Activated B cell treated with CpG ODN at 0.5 μM for 24 hours (primary cell): ENCODE measurements at regions of chr14 and their contacts with region 1.

Region 1: GRCh38 chr14:100285021-100285912 is 21.0 kb downstream of the SLC25A29 start:
- DNase-seq: peak; percentile 92
- ATAC-seq: peak; percentile 93
- H3K4me3 Mint-ChIP-seq: peak overlapping the region; percentile 82
- H3K27ac Mint-ChIP-seq: peak overlapping the region; percentile 85
- H3K4me1 Mint-ChIP-seq: peaks cover 10% of the 10 kb centered on the region
- H3K27me3 Mint-ChIP-seq: no peaks in the 10 kb centered on the region
- CTCF ChIP-seq: peak; percentile 71

Region 2: GRCh38 chr14:99287269-99287942 is 997.9 kb before region 1 on chr14:
- CTCF ChIA-PET with region 1: no interaction called
- POLR2A ChIA-PET with region 1: no interaction called
- intact Hi-C with region 1: no loop called
- DNase-seq: no peak
- ATAC-seq: no peak
- H3K4me3 Mint-ChIP-seq: no peak overlapping the region
- H3K27ac Mint-ChIP-seq: no peak overlapping the region
- H3K4me1 Mint-ChIP-seq: no peaks in the 10 kb centered on the region
- H3K27me3 Mint-ChIP-seq: peaks cover 10% of the 10 kb centered on the region
- CTCF ChIP-seq: no peak

Region 3: GRCh38 chr14:99982537-99983250 is 302.6 kb before region 1 on chr14:
- CTCF ChIA-PET with region 1: no interaction called
- POLR2A ChIA-PET with region 1: no interaction called
- intact Hi-C with region 1: loop called (anchors 5 kb)
- DNase-seq: no peak
- ATAC-seq: peak; percentile 98
- H3K4me3 Mint-ChIP-seq: no peak overlapping the region
- H3K27ac Mint-ChIP-seq: no peak overlapping the region
- H3K4me1 Mint-ChIP-seq: no peaks in the 10 kb centered on the region
- H3K27me3 Mint-ChIP-seq: no peaks in the 10 kb centered on the region
- CTCF ChIP-seq: peak; percentile 88

Region 4: DNA sequence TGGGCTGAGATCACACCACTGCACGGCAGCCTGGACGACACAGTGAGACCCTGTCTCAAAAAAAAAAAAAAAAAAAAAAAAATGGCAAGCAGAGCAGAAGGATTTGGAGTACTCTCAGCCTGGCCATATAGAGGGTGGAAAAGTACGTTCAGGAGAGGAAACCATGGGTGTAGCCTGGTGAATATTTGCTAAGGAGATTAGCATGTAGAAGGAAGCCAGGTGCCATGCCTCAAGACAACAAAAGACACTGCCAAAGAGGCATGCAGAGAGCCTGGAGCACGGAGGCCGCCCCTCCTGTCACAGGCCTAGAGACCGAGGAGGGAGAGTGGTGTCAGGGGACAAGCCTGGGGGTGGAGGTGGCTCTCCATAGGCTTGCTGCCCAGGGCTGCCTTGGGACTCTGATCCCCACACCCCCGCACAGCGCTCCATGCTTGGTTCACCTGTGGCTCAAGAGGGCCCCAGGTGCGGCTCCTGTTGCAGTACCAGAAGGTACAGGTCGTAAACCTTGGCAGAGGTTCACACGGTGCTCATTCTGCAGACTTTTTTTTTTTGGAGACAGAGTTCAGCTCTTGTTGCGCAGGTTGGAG is 97.9 kb before region 1 on chr14:
- CTCF ChIA-PET with region 1: no interaction called
- POLR2A ChIA-PET with region 1: no interaction called
- intact Hi-C with region 1: no loop called
- DNase-seq: no peak
- ATAC-seq: no peak
- H3K4me3 Mint-ChIP-seq: no peak overlapping the region
- H3K27ac Mint-ChIP-seq: no peak overlapping the region
- H3K4me1 Mint-ChIP-seq: no peaks in the 10 kb centered on the region
- H3K27me3 Mint-ChIP-seq: no peaks in the 10 kb centered on the region
- CTCF ChIP-seq: no peak

Region 5: DNA sequence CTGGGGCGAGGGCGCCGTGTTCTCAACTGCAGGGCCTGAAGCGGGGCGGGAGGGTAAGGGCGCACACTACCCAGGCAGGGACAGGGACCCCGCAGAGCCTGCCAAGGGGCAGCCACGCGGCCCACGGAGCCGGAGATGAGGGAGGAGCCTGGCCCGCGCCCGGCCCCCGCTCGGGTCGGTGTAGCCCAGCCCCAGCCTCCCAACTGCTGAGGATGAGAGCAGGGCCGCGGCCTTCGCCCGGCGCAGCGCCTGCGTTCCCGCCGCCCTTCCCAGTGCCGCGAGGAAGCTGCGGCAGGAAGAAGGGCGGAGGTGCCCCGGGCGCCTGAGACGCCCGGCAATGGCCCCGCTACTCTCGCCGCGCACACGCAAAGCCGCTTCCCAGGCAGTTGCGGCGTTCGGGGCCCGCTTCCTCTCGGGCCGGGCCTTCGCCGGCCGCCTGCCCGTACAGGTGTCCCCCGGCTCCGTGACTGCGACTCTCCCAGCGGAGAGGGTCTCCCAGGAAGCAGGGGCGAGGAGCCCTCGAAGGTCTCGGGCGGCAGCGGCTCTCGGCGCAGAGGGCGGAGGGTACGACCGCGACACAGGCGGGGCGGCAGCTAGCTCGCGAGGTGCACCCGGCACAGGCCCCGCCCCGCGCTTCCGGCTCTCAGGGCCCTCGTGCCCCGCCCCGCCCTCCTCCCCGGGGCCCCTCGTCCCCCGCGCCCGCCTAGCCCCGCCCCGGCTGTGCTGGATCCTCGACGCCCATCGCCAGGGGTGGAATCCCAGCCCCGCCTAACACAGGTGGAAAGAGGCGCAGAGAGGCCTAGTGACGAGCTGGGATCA is 71.1 kb before region 1 on chr14:
- CTCF ChIA-PET with region 1: no interaction called
- POLR2A ChIA-PET with region 1: no interaction called
- intact Hi-C with region 1: loop called (anchors 1 kb)
- DNase-seq: peak; percentile 91
- ATAC-seq: peak; percentile 96
- H3K4me3 Mint-ChIP-seq: peak overlapping the region; percentile 85
- H3K27ac Mint-ChIP-seq: peak overlapping the region; percentile 80
- H3K4me1 Mint-ChIP-seq: peaks cover 17% of the 10 kb centered on the region
- H3K27me3 Mint-ChIP-seq: no peaks in the 10 kb centered on the region
- CTCF ChIP-seq: no peak

Region 6: GRCh38 chr14:100297302-100298300 is 12.3 kb after region 1 on chr14:
- CTCF ChIA-PET with region 1: interaction called, 8 read pairs
- POLR2A ChIA-PET with region 1: interaction called, 4 read pairs
- intact Hi-C with region 1: loop called (anchors 1 kb)
- DNase-seq: peak; percentile 42
- ATAC-seq: peak; percentile 83
- H3K4me3 Mint-ChIP-seq: peak overlapping the region; percentile 70
- H3K27ac Mint-ChIP-seq: peak overlapping the region; percentile 87
- H3K4me1 Mint-ChIP-seq: peaks cover 60% of the 10 kb centered on the region
- H3K27me3 Mint-ChIP-seq: no peaks in the 10 kb centered on the region
- CTCF ChIP-seq: no peak

Region 7: DNA sequence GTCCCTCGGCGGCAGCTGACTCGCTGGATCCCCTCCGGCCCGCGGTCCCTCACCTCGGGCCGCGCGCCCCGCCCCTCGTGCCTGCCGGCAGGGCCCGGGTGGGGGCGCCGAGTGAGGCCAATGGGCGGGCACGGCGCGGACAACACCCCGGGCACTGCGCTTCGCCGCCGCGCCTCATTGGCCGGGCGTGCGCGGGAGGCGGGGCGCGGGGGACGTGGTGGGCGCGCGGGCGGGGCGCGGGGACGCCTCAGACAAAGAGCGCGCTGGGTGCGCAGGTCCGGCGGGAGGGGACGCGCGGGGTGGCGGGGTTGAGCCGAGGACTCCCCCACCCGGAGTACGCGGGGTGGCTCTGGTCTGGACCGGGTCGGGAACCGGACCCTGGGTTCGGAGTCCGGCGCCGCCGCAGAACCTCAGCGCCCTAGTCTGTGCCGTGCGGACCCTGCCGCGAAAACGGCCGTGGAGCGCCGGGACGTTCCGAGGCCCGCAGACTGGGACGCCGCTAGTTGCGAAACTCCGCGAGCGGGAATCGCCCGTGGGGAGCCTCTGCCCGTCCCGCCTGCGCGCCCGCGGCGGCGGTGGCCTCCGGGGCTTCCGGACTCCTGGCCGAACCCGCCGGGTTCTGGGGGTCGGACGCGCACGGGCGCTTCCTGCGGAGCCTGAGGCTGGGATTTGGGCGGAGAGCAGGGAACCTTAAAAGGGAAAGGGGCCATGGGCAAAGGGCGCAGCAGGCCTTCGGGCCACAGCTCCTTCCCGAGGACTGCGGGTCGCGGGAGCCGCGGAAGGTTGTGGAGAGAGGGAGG is 21.4 kb after region 1 on chr14 and contains the start of gene SLC25A29:
- CTCF ChIA-PET with region 1: interaction called, 6 read pairs
- POLR2A ChIA-PET with region 1: interaction called, 4 read pairs
- intact Hi-C with region 1: loop called (anchors 1 kb)
- DNase-seq: peak; percentile 86
- ATAC-seq: peak; percentile 93
- H3K4me3 Mint-ChIP-seq: peak within 1 kb of the TSS; percentile 87
- H3K27ac Mint-ChIP-seq: peak within 1 kb of the TSS; percentile 66
- H3K4me1 Mint-ChIP-seq: peaks cover 21% of the 10 kb centered on the region
- H3K27me3 Mint-ChIP-seq: no peaks in the 10 kb centered on the region
- CTCF ChIP-seq: no peak
- total RNA-seq, gene SLC25A29: 20.6 and 28.8 TPM in 2 replicates

Region 8: GRCh38 chr14:100317912-100318808 is 32.9 kb after region 1 on chr14:
- CTCF ChIA-PET with region 1: interaction called, 5 read pairs
- POLR2A ChIA-PET with region 1: interaction called, 3 read pairs
- intact Hi-C with region 1: loop called (anchors 1 kb)
- DNase-seq: peak; percentile 76
- ATAC-seq: peak; percentile 98
- H3K4me3 Mint-ChIP-seq: peak overlapping the region; percentile 80
- H3K27ac Mint-ChIP-seq: peak overlapping the region; percentile 82
- H3K4me1 Mint-ChIP-seq: peaks cover 3% of the 10 kb centered on the region
- H3K27me3 Mint-ChIP-seq: no peaks in the 10 kb centered on the region
- CTCF ChIP-seq: peak; percentile 78

Region 9: DNA sequence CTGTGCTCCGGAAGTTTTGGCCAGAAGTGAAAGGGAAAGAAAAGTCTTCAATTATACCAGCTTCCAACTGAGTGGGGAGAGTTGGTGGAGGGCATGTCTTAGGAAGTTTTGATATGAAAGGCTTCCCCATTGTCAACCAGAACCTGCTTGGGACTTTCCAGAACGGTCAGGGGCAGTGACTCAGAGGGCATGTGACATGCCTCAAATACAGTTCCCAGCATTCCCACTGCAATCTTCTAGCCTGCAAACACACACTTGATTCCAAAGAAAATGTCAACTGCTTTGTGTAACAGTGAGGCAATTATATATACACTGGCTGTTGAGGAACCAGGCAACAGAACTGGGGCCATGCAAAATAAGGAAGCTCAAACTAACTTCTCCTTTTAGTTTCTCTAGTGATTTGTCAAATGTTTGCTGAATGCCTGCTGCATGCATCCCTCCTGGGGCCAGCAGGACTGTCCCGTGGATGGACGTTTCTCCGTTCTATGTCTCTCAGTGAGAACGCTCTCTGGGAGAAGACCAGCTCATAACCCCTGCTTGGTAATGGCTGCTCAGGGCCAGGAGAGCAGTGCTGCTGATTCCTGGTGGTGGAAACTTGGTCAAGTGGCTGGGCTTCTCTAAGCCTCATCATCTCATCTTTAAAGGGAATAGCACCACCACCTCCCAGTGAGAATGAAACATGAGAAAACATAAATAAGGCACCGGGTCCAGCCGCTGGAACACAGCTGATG is 56.2 kb after region 1 on chr14:
- CTCF ChIA-PET with region 1: interaction called, 3 read pairs
- POLR2A ChIA-PET with region 1: interaction called, 4 read pairs
- intact Hi-C with region 1: loop called (anchors 1 kb)
- DNase-seq: no peak
- ATAC-seq: peak; percentile 93
- H3K4me3 Mint-ChIP-seq: peak overlapping the region; percentile 41
- H3K27ac Mint-ChIP-seq: peak overlapping the region; percentile 92
- H3K4me1 Mint-ChIP-seq: peaks cover 32% of the 10 kb centered on the region
- H3K27me3 Mint-ChIP-seq: no peaks in the 10 kb centered on the region
- CTCF ChIP-seq: no peak

Region 10: GRCh38 chr14:100362311-100362927 is 77.2 kb after region 1 on chr14:
- CTCF ChIA-PET with region 1: no interaction called
- POLR2A ChIA-PET with region 1: no interaction called
- intact Hi-C with region 1: no loop called
- DNase-seq: no peak
- ATAC-seq: no peak
- H3K4me3 Mint-ChIP-seq: no peak overlapping the region
- H3K27ac Mint-ChIP-seq: no peak overlapping the region
- H3K4me1 Mint-ChIP-seq: no peaks in the 10 kb centered on the region
- H3K27me3 Mint-ChIP-seq: no peaks in the 10 kb centered on the region
- CTCF ChIP-seq: no peak

Region 11: GRCh38 chr14:100554082-100554677 is 268.9 kb after region 1 on chr14:
- CTCF ChIA-PET with region 1: no interaction called
- POLR2A ChIA-PET with region 1: no interaction called
- intact Hi-C with region 1: no loop called
- DNase-seq: no peak
- ATAC-seq: no peak
- H3K4me3 Mint-ChIP-seq: no peak overlapping the region
- H3K27ac Mint-ChIP-seq: no peak overlapping the region
- H3K4me1 Mint-ChIP-seq: peaks cover 4% of the 10 kb centered on the region
- H3K27me3 Mint-ChIP-seq: peaks cover 16% of the 10 kb centered on the region
- CTCF ChIP-seq: no peak